ENCODE measurements at regions of chr17 and their contacts with region 1.

Region 1: DNA sequence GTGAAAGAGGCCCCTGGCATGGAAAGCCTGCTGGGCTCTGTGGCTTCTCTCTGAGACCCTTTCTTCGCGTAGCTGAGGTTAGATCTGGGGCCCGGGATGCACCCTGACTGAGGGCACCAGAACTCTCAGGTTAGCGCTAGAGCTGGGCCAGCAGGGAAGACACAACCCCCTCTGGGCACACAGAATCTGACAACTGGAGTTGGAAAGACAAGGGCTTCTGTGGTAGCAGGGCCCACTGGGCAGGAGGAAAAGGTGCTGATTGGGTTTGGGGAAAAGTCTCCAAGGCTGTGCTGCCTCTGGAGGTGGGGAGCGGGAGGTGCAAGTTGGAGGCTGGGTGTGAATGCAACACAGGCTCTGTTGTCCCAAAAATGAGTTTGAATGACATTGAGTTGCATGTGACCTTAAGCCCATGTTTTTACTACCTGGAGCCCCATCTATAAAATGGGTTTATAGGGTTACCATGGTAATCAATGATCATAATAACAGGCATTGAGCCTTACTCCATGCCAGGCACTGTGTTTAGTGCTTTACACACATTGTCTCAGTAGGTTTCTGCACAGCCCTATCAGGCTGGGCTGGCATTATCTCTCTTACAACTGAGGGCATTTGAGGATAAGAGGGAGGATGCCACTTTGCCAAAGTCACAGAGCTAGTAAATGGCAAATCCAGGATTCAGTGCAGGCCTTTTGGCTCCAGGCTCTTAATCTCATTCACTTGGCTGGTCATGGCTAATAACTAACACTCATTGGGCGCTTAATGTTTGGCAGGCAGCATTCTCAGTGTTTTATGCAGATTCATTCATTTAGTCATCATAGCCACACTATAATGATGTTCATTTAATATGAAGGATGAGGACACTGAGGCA is 9.5 kb upstream of the IGFBP4 start:
- DNase-seq: no peak

Region 2: DNA sequence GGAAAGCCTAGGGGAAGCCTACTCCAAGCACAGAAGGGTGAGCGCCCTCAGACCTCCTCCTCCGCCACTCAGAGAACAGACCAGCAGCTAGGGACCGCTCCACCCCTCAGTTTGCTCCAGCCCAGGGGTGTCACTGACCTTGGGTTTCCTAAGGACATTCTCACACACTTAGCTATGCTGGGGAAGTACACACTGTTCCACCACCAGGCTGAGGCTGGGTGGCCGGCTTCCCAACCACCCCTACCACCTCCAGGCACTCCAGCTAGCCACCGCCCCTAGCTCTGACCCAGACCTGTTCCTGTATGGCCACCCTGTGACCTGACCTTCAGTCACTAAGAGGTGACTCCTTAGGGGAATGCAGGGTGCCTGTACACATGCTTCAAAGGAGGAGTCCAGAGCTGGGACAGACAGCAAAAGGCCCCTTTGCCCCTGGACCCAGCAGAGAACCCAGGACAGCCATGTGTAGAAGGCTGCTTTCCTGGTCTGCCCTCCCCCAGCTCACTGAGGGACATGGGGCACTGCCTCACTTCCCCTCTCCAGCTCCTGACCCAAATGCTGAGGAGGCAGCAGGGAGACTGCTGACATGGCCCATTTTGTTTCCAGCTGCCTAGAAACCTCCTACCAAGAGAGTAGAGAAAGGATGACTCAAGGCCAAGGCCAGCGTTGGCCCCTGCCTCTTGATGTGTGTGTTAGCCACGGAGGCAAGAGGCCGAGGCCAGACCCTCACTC is 1695.5 kb after region 1 on chr17:
- intact Hi-C with region 1: loop called in 1 of 2 experiments (anchors 5 kb)
- DNase-seq: no peak